Activated naive CD4-positive, alpha-beta T cell treated with anti-CD3 and anti-CD28 coated beads for 36 hours (primary cell): ENCODE measurements at regions of chr16 and their contacts with region 1.

Region 1: GRCh38 chr16:9047686-9048301 is 43.6 kb upstream of the HAPSTR1 start:
- DNase-seq: peak; percentile 81
- H3K4me3 Mint-ChIP-seq: no peak overlapping the region
- H3K27ac Mint-ChIP-seq: peak overlapping the region; percentile 57
- H3K4me1 Mint-ChIP-seq: peaks cover 32% of the 10 kb centered on the region
- H3K27me3 Mint-ChIP-seq: no peaks in the 10 kb centered on the region

Region 2: DNA sequence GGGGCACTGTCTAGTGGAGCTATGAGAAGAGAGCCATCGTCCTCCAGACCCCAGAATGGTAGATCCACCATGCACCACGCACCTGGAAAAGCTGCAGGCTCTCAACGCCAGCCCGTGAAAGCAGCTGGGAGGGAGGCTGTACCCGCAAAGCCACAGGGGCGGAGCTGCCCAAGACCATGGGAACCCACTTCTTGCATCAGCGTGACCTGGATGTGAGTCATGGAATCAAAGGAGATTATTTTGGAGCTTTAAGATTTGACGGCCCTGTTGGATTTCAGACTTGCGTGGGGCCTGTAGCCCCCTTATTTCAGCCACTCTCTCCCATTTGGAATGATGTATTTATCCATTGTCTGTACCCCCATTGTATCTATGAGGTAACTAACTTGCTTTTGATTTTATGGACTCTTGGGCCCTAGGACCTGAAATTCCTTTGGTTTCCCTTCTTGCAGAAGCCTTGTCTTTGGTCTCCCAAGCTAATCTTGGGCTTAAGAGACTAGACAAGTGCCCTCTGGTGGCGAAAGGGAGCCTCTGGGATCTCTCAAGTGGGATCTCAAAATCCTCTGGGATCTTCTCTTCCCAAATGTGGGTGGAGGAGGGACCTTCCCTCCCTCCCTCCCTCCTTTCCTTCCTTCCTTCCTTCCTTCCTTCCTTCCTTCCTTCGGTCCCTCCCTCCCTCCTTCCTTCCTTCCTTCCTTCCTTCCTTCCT is 14.5 kb before region 1 on chr16:
- CTCF ChIA-PET with region 1: interaction called, 16 read pairs
- intact Hi-C with region 1: no loop called
- DNase-seq: no peak
- H3K4me3 Mint-ChIP-seq: no peak overlapping the region
- H3K27ac Mint-ChIP-seq: no peak overlapping the region
- H3K4me1 Mint-ChIP-seq: no peaks in the 10 kb centered on the region
- H3K27me3 Mint-ChIP-seq: no peaks in the 10 kb centered on the region

Region 3: GRCh38 chr16:9072806-9073341 is 25.1 kb after region 1 on chr16:
- CTCF ChIA-PET with region 1: interaction called, 5 read pairs
- intact Hi-C with region 1: loop called (anchors 1 kb)
- DNase-seq: peak; percentile 68
- H3K4me3 Mint-ChIP-seq: peak overlapping the region; percentile 48
- H3K27ac Mint-ChIP-seq: peak overlapping the region; percentile 96
- H3K4me1 Mint-ChIP-seq: peaks cover 51% of the 10 kb centered on the region
- H3K27me3 Mint-ChIP-seq: no peaks in the 10 kb centered on the region